Astrocyte of the cerebellum (primary cell): ENCODE measurements at regions of chr1 and their contacts with region 1.

Region 1: GRCh38 chr1:116457946-116458604 is 85.0 kb downstream of the ATP1A1 start:
- DNase-seq: no peak
- H3K4me3 ChIP-seq: no peak overlapping the region
- CTCF ChIP-seq: no peak

Region 2: GRCh38 chr1:116409751-116410191 is 48.3 kb before region 1 on chr1:
- in situ Hi-C with region 1: no loop called
- DNase-seq: no peak
- H3K4me3 ChIP-seq: no peak overlapping the region
- CTCF ChIP-seq: no peak

Region 3: GRCh38 chr1:116420417-116421200 is 37.5 kb before region 1 on chr1:
- in situ Hi-C with region 1: loop called (anchors 5 kb)
- DNase-seq: no peak
- H3K4me3 ChIP-seq: no peak overlapping the region
- CTCF ChIP-seq: no peak

Region 4: GRCh38 chr1:116492358-116492811 is 34.3 kb after region 1 on chr1:
- in situ Hi-C with region 1: loop called (anchors 5 kb)
- DNase-seq: no peak
- H3K4me3 ChIP-seq: no peak overlapping the region
- CTCF ChIP-seq: no peak

Region 5: DNA sequence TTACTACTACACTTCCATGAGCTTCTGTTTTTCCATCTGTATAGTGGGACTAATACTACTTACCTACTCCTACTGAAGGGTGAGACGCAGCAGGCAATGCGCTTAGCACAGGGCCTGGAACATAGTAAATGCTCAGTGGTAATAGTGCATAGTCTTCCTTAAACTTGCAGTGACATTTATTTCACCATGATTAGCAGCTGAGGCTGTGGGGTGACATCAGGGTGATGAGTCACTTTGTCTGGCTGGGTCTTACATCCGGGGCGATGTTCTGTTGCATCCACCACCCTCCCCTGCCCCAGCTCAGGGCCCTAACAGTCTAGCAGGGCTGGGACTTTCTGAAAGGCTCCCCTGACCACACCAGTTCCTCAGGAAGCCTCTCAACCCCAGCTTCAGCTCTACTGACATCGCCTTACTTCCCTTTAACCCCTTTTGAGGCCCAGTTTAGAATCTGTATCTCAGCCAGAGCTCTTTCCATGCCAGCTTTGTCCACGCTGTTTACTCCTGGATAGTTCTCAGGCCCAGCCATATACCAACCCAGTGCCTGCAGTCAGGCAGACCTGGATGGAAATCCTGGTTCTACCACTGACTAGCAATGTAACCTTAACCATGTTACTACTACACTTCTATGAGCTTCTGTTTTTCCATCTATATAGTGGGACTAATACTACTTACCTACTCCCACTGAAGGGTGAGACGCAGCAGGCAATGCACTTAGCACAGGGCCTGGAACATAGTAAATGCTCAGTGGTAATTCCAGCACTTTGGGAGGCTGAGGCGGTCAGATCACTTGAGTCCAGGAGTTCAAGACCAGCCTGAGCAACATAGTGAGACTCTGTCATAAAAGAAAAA is 46.5 kb after region 1 on chr1:
- in situ Hi-C with region 1: no loop called
- DNase-seq: no peak
- H3K4me3 ChIP-seq: no peak overlapping the region
- CTCF ChIP-seq: no peak